Common myeloid progenitor, CD34-positive (primary cell): ENCODE measurements at regions of chr17 and their contacts with region 1.

Region 1: GRCh38 chr17:43114151-43114552 is 11.0 kb downstream of the BRCA1 start:
- DNase-seq: no peak
- H3K4me3 ChIP-seq: no peak overlapping the region
- H3K27ac ChIP-seq: no peak overlapping the region
- H3K4me1 ChIP-seq: no peaks in the 10 kb centered on the region
- H3K27me3 ChIP-seq: no peaks in the 10 kb centered on the region

Region 2: DNA sequence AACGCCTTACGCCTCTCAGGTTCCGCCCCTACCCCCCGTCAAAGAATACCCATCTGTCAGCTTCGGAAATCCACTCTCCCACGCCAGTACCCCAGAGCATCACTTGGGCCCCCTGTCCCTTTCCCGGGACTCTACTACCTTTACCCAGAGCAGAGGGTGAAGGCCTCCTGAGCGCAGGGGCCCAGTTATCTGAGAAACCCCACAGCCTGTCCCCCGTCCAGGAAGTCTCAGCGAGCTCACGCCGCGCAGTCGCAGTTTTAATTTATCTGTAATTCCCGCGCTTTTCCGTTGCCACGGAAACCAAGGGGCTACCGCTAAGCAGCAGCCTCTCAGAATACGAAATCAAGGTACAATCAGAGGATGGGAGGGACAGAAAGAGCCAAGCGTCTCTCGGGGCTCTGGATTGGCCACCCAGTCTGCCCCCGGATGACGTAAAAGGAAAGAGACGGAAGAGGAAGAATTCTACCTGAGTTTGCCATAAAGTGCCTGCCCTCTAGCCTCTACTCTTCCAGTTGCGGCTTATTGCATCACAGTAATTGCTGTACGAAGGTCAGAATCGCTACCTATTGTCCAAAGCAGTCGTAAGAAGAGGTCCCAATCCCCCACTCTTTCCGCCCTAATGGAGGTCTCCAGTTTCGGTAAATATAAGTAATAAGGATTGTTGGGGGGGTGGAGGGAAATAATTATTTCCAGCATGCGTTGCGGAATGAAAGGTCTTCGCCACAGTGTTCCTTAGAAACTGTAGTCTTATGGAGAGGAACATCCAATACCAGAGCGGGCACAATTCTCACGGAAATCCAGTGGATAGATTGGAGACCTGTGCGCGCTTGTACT is 11.2 kb after region 1 on chr17 and contains the start of gene BRCA1:
- CTCF ChIA-PET with region 1: interaction called, 10 read pairs
- POLR2A ChIA-PET with region 1: no interaction called
- DNase-seq: peak; percentile 99 to 100 (median 99)
- H3K4me3 ChIP-seq: peak within 1 kb of the TSS; percentile 44 to 99 (median 92)
- H3K27ac ChIP-seq: peak within 1 kb of the TSS; percentile 88 to 97
- H3K4me1 ChIP-seq: peaks cover 0 to 16% (median 15%) of the 10 kb centered on the region in 4 experiments
- H3K27me3 ChIP-seq: no peaks in the 10 kb centered on the region

Region 3: DNA sequence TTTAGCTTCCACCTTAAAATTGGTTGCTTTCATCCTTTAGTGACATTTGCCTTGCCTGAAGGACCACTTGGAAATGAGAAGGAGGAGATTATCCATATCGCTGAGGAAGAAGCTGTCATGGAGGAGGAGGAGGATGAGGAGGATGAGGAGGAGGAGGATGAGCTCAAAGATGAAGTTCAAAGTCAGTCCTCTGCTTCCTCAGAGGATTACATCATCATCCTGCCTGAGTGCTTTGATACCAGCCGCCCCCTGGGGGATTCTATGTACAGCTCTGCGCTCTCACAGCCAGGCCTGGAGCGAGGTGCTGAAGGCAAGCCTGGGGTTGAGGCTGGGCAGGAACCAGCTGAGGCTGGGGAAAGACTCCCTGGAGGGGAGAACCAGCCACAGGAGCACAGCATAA is 86.0 kb after region 1 on chr17:
- CTCF ChIA-PET with region 1: no interaction called
- POLR2A ChIA-PET with region 1: no interaction called
- DNase-seq: no peak
- H3K4me3 ChIP-seq: no peak overlapping the region
- H3K27ac ChIP-seq: no peak overlapping the region
- H3K4me1 ChIP-seq: no peaks in the 10 kb centered on the region
- H3K27me3 ChIP-seq: no peaks in the 10 kb centered on the region